K562 (cell line): ENCODE measurements at regions of chr1 and their contacts with region 1.

Region 1: DNA sequence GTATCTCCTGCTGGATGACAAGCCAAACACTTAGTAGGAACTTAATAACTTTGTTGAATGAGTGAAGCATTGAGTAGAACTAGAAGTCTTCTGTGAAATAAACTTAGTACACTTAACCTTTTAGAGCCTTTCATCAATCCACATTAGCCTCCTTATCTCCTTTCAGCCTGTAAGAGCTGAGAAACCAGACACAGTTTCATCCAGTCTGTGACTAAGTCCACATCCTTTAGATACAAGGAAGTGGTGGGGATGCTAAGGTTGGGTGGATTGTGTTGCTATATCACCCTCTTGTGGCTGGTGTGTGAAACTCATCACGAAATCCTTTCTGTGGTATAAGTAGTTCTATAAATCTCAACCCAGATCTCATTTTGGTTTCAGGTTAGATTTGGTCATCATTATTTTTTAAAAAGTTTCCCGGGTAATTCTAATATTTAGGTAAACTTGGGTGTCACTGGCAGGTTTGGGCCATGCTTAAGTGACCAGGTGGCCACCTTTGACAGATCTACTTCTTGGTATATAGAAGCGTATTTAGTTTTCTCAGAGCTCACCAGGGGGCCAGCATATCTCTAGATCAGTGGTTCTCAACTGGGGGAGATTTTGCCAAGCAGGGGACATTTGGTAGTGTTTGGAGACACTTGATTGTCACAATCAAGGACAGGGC is 27.8 kb upstream of the CD84 start:
- DNase-seq: peak; percentile 71 to 86 (median 74)
- ATAC-seq: peak; percentile 97
- H3K4me3 ChIP-seq: no peak overlapping the region
- H3K27ac ChIP-seq: no peak overlapping the region
- H3K4me1 ChIP-seq: peaks cover 0 to 22% of the 10 kb centered on the region in 2 experiments; a peak in 2 of 5 replicates
- H3K27me3 ChIP-seq: no peaks in the 10 kb centered on the region
- CTCF ChIP-seq: peak; percentile 80 to 95 (median 84)
- EP300 ChIP-seq: 0 out of 2 replicates have a peak, but pooled peaks have one; percentile 40
- POLR2A ChIP-seq: no peak
- RAD21 ChIP-seq: peak; percentile 99 to 100

Region 2: GRCh38 chr1:160022330-160023310 is 584.5 kb before region 1 on chr1:
- CTCF ChIA-PET with region 1: no interaction called
- POLR2A ChIA-PET with region 1: no interaction called
- in situ Hi-C with region 1: no loop called
- intact Hi-C with region 1: no loop called
- DNase-seq: peak in 1 of 4 experiments; percentile 19
- ATAC-seq: no peak; the same call in 2 of the 3 replicates
- H3K4me3 ChIP-seq: no peak overlapping the region
- H3K27ac ChIP-seq: no peak overlapping the region
- H3K4me1 ChIP-seq: peaks cover 0 to 11% of the 10 kb centered on the region in 2 experiments; a peak in 2 of 5 replicates
- H3K27me3 ChIP-seq: peaks cover 2 to 7% of the 10 kb centered on the region in 2 experiments; a peak in 2 of 5 replicates
- CTCF ChIP-seq: no peak
- EP300 ChIP-seq: no peak
- POLR2A ChIP-seq: no peak
- RAD21 ChIP-seq: no peak

Region 3: GRCh38 chr1:160428655-160429054 is 178.5 kb before region 1 on chr1:
- CTCF ChIA-PET with region 1: interaction called, 54 read pairs
- POLR2A ChIA-PET with region 1: no interaction called
- in situ Hi-C with region 1: loop called (anchors 5 kb)
- intact Hi-C with region 1: loop called (anchors 1 kb)
- DNase-seq: peak; percentile 70 to 77 (median 74)
- ATAC-seq: peak; percentile 89
- H3K4me3 ChIP-seq: no peak overlapping the region
- H3K27ac ChIP-seq: no peak overlapping the region; the same call in 2 of the 3 replicates
- H3K4me1 ChIP-seq: peaks cover 4 to 16% of the 10 kb centered on the region in 2 experiments; a peak in 4 of 5 replicates
- H3K27me3 ChIP-seq: no peaks in the 10 kb centered on the region
- CTCF ChIP-seq: peak; percentile 70 to 95 (median 87)
- EP300 ChIP-seq: peak; percentile 38; the same call in 1 of the 2 replicates
- POLR2A ChIP-seq: no peak
- RAD21 ChIP-seq: peak; percentile 99

Region 4: GRCh38 chr1:160494620-160495019 is 112.5 kb before region 1 on chr1:
- CTCF ChIA-PET with region 1: no interaction called
- POLR2A ChIA-PET with region 1: no interaction called
- in situ Hi-C with region 1: no loop called
- intact Hi-C with region 1: loop called (anchors 2 kb)
- DNase-seq: peak in 1 of 4 experiments; percentile 42
- ATAC-seq: peak; percentile 82
- H3K4me3 ChIP-seq: no peak overlapping the region
- H3K27ac ChIP-seq: no peak overlapping the region
- H3K4me1 ChIP-seq: 0 out of 5 replicates have a peak, but pooled peaks cover 0 to 4% of the 10 kb centered on the region in 2 experiments
- H3K27me3 ChIP-seq: no peaks in the 10 kb centered on the region
- CTCF ChIP-seq: peak; percentile 37 to 40 (median 39); a peak in 5 of 6 replicates
- EP300 ChIP-seq: no peak
- POLR2A ChIP-seq: no peak
- RAD21 ChIP-seq: peak in 1 of 2 experiments; percentile 59; a peak in 2 of 4 replicates

Region 5: DNA sequence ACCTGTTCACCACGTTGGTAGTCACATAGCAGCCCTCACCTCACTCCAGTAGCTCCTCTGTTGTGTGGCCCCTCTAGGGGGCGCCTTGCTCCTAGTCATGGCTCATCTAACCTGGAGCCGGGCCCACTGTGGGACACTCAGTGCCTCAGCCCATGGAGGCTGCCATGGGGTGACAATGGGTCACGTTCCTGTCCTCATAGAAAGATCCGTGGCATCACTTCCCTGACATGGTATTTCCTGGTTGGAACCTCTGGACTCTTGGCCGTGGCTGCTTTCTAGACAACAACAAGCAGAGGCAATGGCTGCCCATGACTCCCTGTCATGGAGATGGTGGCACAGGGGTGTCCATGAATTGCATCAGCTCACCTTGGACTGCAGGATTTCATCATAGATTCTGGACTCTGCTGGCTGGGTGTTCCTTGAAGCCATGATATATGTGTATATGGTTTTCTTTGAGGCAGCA is 56.5 kb before region 1 on chr1:
- CTCF ChIA-PET with region 1: no interaction called
- POLR2A ChIA-PET with region 1: no interaction called
- in situ Hi-C with region 1: no loop called
- intact Hi-C with region 1: loop called (anchors 1 kb)
- DNase-seq: peak in 3 of 4 experiments; percentile 35 to 69 (median 37)
- ATAC-seq: peak; percentile 77
- H3K4me3 ChIP-seq: no peak overlapping the region
- H3K27ac ChIP-seq: no peak overlapping the region; the same call in 2 of the 3 replicates
- H3K4me1 ChIP-seq: peaks cover 33 to 57% of the 10 kb centered on the region in 2 experiments
- H3K27me3 ChIP-seq: no peaks in the 10 kb centered on the region
- CTCF ChIP-seq: peak; percentile 44 to 47 (median 44); a peak in 4 of 6 replicates
- EP300 ChIP-seq: no peak
- POLR2A ChIP-seq: no peak
- RAD21 ChIP-seq: peak in 1 of 2 experiments; percentile 63; a peak in 2 of 4 replicates

Region 6: DNA sequence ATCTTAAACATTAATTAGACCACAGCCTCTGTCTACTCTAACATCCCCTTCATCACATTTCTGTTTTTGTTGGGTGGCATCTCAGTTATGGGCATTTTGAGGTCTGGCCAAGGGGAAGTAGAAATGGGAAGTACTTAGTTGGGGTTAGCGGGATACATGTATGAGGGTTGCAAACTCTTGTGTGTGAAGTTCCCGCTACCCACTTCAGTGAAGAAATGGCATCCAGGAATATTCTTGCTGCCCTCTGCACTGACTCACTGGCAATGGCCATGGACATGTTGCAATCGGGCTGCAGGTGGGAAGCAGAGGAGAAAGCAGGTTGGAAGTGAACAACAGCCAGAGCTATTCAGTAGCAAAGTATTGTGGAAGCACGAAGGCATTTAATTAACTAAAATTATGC is 97.1 kb after region 1 on chr1:
- CTCF ChIA-PET with region 1: no interaction called
- POLR2A ChIA-PET with region 1: no interaction called
- in situ Hi-C with region 1: no loop called
- intact Hi-C with region 1: no loop called
- DNase-seq: no peak
- ATAC-seq: no peak
- H3K4me3 ChIP-seq: no peak overlapping the region
- H3K27ac ChIP-seq: no peak overlapping the region
- H3K4me1 ChIP-seq: no peaks in the 10 kb centered on the region; a peak in 1 of 5 replicates
- H3K27me3 ChIP-seq: peaks cover 22% of the 10 kb centered on the region in 2 experiments
- CTCF ChIP-seq: no peak
- EP300 ChIP-seq: no peak
- POLR2A ChIP-seq: no peak
- RAD21 ChIP-seq: no peak